ENCODE measurements at regions of chr9 and their contacts with region 1.

Region 1: GRCh38 chr9:98118640-98119601 is at the start of gene TRIM14:
- DNase-seq: peak in 8 of 10 donors; percentile 21 to 59 (median 46)
- ATAC-seq: peak; percentile 50 to 67
- H3K4me3 Mint-ChIP-seq: peak within 1 kb of the TSS; percentile 86 to 99 (median 92)
- H3K27ac Mint-ChIP-seq: peak within 1 kb of the TSS; percentile 92 to 99 (median 96)
- H3K4me1 Mint-ChIP-seq: peaks cover 23 to 65% (median 55%) of the 10 kb centered on the region in 4 donors
- H3K27me3 Mint-ChIP-seq: no peaks in the 10 kb centered on the region
- polyA plus RNA-seq, gene TRIM14: 48.7 to 84.0 (median 68.4) TPM

Region 2: GRCh38 chr9:97348866-97349265 is 770.1 kb before region 1 on chr9:
- POLR2A ChIA-PET with region 1: no interaction called
- DNase-seq: no peak
- ATAC-seq: no peak
- H3K4me3 Mint-ChIP-seq: no peak overlapping the region
- H3K27ac Mint-ChIP-seq: no peak overlapping the region
- H3K4me1 Mint-ChIP-seq: peaks cover 0 to 3% (median under 1%) of the 10 kb centered on the region in 4 donors
- H3K27me3 Mint-ChIP-seq: no peaks in the 10 kb centered on the region

Region 3: DNA sequence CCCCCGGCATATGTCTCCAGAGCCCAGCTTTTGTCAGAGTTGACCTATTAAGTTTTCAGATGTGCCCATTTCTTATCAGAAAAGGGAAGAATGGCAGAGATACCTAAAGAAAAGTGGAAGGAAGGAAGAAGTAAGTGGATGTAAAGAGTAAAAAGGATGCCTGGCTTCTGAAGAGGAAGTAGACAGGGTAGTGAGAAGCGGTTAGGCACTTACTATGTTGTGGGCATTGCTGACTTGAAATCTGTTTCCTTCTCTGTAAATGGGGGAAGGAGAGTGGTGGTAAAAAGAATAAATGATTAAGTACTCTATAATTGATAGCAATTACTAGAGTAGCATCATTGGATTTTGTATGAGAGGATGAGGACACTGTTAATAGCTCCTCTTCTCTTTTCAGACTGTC is 125.9 kb before region 1 on chr9:
- POLR2A ChIA-PET with region 1: no interaction called
- DNase-seq: peak in 2 of 10 donors; percentile 45 to 59
- ATAC-seq: peak; percentile 84 to 93
- H3K4me3 Mint-ChIP-seq: peak overlapping the region; percentile 26 to 70 (median 52)
- H3K27ac Mint-ChIP-seq: peak overlapping the region; percentile 14 to 87 (median 76)
- H3K4me1 Mint-ChIP-seq: peaks cover 34 to 81% (median 78%) of the 10 kb centered on the region in 4 donors
- H3K27me3 Mint-ChIP-seq: no peaks in the 10 kb centered on the region

Region 4: GRCh38 chr9:98074115-98074990 is 44.6 kb before region 1 on chr9:
- POLR2A ChIA-PET with region 1: interaction called, 18 read pairs
- DNase-seq: peak; percentile 46 to 80 (median 69)
- ATAC-seq: no peak
- H3K4me3 Mint-ChIP-seq: peak overlapping the region in 9 of 10 donors; percentile 52 to 84 (median 66)
- H3K27ac Mint-ChIP-seq: peak overlapping the region; percentile 93 to 98 (median 96)
- H3K4me1 Mint-ChIP-seq: peaks cover 5 to 48% (median 37%) of the 10 kb centered on the region in 4 donors
- H3K27me3 Mint-ChIP-seq: no peaks in the 10 kb centered on the region

Region 5: GRCh38 chr9:98101868-98102273 is 17.1 kb before region 1 on chr9:
- POLR2A ChIA-PET with region 1: interaction called, 238 read pairs
- DNase-seq: peak; percentile 59 to 94 (median 80)
- ATAC-seq: peak; percentile 96 to 98
- H3K4me3 Mint-ChIP-seq: peak overlapping the region; percentile 60 to 86 (median 74)
- H3K27ac Mint-ChIP-seq: peak overlapping the region; percentile 88 to 99 (median 96)
- H3K4me1 Mint-ChIP-seq: peaks cover 38 to 93% (median 84%) of the 10 kb centered on the region in 4 donors
- H3K27me3 Mint-ChIP-seq: no peaks in the 10 kb centered on the region

Region 6: DNA sequence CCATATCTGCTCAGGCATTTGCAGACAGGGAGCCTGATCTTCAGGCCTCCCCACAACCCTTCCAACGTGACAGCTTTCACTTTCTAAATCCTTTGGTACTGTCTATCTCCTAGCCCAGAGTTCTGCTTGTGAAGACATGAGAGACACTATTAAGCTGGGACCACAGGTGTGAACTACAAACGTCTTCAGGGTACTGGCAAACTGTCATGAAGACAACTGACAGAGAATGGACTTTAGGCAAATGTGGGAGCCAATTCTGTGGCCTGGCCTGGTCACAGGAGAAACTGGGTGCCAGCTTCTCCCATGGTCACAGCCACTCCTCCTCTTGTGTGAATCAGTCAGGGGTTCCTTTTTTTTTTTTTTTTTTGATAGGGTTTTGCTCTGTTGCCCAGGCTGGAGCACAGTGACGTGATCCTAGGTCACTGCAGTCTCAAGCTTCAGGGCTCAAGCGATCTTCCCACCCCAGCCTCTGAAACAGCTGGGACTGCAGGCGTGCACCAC is 10.3 kb before region 1 on chr9:
- POLR2A ChIA-PET with region 1: interaction called, 238 read pairs
- DNase-seq: peak in 7 of 10 donors; percentile 13 to 73 (median 53)
- ATAC-seq: peak; percentile 90 to 96
- H3K4me3 Mint-ChIP-seq: peak overlapping the region; percentile 58 to 84 (median 76)
- H3K27ac Mint-ChIP-seq: peak overlapping the region; percentile 93 to 99 (median 98)
- H3K4me1 Mint-ChIP-seq: peaks cover 34 to 91% (median 78%) of the 10 kb centered on the region in 4 donors
- H3K27me3 Mint-ChIP-seq: no peaks in the 10 kb centered on the region

Region 7: DNA sequence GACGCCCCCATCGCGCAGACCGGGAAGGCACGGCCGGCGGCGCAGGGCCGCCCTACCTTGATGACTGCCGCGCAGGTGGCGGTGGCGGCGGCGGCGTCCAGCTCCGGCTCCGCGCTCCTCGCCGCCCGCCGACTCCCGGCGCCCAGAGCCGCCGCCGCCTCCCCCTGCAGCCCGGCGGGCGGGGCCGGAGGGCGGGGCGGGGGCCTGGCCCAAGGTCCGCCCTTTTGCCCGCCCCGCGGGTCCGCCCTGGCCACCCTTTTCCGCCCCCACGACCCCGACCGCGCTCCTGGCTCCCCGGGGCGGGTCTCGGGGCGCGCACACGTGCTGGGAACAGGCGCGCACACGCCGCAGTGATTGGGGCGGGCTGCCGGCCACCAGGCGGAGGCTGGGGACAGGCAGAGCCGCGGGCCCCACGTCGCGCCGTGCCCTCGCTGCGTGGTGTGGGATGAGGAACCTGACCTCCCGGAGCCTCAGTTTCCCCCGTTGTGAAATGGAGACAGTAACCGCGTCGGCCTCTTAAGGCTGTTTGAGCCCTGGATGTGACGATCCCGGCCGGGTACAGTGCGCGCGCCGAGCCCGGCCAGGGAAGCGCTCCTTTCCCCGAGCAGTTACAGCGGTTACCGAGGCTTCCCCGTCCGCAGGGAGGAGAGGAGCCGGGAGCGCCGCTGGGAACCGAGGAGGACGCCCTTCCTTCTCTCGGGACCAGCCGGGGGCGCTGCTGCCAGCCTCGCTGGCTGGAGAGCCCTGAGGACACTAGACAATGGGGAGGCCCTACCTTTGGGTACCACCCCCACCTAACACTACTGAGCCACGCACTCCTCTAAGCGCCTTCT is 73.8 kb after region 1 on chr9 and contains the start of gene CORO2A:
- POLR2A ChIA-PET with region 1: interaction called, 25 read pairs
- DNase-seq: peak; percentile 48 to 76 (median 57)
- ATAC-seq: peak; percentile 66 to 76
- H3K4me3 Mint-ChIP-seq: peak within 1 kb of the TSS; percentile 81 to 93 (median 88)
- H3K27ac Mint-ChIP-seq: peak within 1 kb of the TSS; percentile 65 to 92 (median 86)
- H3K4me1 Mint-ChIP-seq: peaks cover 22 to 46% (median 38%) of the 10 kb centered on the region in 4 donors
- H3K27me3 Mint-ChIP-seq: no peaks in the 10 kb centered on the region
- polyA plus RNA-seq, gene CORO2A: 5.2 to 11.7 (median 9.5) TPM

Measured in naive thymus-derived CD8-positive, alpha-beta T cell (primary cell).